ENCODE measurements at regions of chr6 and their contacts with region 1.

Region 1: DNA sequence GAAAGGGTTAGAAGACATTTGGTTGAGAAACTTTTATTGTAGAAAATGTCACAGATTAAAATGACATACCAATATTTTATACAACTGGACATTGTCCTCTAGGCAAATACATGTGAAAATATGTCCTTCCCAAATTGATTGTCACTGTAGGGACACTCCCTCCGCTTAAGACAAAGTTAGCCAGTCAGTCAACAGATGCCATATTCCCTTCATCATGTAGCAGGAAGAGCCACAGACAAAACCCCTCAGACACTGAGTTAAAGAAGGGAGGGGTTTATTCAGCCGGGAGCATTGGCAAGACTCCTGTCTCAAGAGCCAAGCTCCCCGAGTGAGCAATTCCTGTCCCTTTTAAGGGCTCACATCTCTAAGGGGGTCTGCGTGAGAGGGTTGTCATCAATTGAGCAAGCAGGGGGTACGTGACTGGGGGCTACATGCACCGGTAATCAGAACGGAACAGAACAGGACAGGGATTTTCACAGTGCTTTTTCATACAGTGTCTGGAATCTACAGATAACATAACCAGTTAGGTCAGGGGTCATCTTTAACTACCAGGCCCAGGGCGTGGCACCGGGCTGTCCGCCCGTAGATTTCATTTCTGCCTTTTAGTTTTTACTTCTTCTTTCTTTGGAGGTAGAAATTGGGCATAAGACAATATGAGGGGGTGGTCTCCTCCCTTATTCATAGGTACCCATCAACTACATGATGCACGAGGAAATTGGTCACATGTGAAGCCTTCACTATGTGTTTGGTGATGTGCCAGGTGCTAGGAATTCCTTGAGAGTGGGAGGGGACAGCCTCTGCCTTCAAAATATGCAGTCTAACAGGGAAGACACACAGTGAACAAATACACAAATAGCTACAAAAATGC is 155.7 kb upstream of the CDYL start:
- DNase-seq: no peak
- ATAC-seq: no peak
- H3K4me3 ChIP-seq: no peak overlapping the region
- H3K27ac ChIP-seq: no peak overlapping the region
- H3K4me1 ChIP-seq: no peaks in the 10 kb centered on the region
- H3K27me3 ChIP-seq: no peaks in the 10 kb centered on the region
- CTCF ChIP-seq: no peak
- EP300 ChIP-seq: no peak
- POLR2A ChIP-seq: no peak
- RAD21 ChIP-seq: no peak

Region 2: DNA sequence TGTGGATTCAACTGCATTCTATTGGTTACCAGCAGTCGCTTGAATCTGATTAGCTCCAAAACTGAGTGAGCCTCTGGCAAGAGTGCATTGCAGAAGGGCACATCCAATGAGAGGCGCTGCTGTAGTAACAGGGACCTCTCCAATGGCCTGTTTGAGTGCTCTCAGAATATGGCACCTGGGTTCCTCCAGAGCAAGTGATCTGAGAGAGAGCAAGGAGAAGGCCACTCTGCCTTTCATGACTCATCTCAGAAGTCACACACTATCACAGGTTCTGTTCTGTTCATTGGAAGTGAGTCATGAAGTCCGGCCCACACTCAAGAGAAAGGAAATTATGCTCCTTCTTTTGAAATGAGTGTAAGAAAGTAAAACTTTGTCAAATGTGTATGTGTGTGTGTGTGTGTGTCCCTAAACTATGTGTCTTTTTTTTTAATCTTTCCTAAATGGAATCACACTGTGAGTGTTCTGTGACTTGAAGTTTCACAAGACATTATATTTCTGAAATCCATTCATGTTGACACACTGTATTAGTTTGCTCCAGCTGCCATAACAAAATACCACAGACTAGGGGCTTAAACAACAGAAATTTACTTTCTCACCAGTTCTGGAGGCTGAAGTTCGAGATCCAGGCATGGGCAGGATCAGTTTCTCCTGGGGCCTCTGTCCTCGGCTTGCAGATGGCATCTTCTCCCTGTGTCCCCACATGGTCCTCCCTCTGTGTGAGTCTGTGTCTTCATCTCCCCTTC is 17.3 kb after region 1 on chr6:
- CTCF ChIA-PET with region 1: no interaction called
- POLR2A ChIA-PET with region 1: no interaction called
- RAD21 ChIA-PET with region 1: no interaction called
- SMC1A ChIA-PET with region 1: no interaction called
- in situ Hi-C with region 1: no loop called
- intact Hi-C with region 1: no loop called
- DNase-seq: peak; percentile 4
- ATAC-seq: peak; percentile 66
- H3K4me3 ChIP-seq: no peak overlapping the region
- H3K27ac ChIP-seq: no peak overlapping the region
- H3K4me1 ChIP-seq: no peaks in the 10 kb centered on the region
- H3K27me3 ChIP-seq: no peaks in the 10 kb centered on the region
- CTCF ChIP-seq: no peak
- EP300 ChIP-seq: no peak
- POLR2A ChIP-seq: no peak
- RAD21 ChIP-seq: no peak

Region 3: GRCh38 chr6:5898559-5898958 is 1278.0 kb after region 1 on chr6:
- CTCF ChIA-PET with region 1: no interaction called
- POLR2A ChIA-PET with region 1: interaction called, 10 read pairs
- RAD21 ChIA-PET with region 1: no interaction called
- SMC1A ChIA-PET with region 1: no interaction called
- in situ Hi-C with region 1: no loop called
- intact Hi-C with region 1: no loop called
- DNase-seq: no peak
- ATAC-seq: peak; percentile 40; the same call in 1 of the 3 replicates
- H3K4me3 ChIP-seq: no peak overlapping the region
- H3K27ac ChIP-seq: no peak overlapping the region
- H3K4me1 ChIP-seq: no peaks in the 10 kb centered on the region
- H3K27me3 ChIP-seq: no peaks in the 10 kb centered on the region
- CTCF ChIP-seq: peak in 2 of 3 experiments; percentile 2 to 9; a peak in 1 of 6 replicates
- EP300 ChIP-seq: no peak
- POLR2A ChIP-seq: no peak
- RAD21 ChIP-seq: no peak